Activated CD8-positive, alpha-beta T cell treated with anti-CD3 and anti-CD28 coated beads, Interleukin-2, amount 10 ng/mL, durations not matched to agents 7 days and 5 days (primary cell): ENCODE measurements at regions of chr6 and their contacts with region 1.

Region 1: GRCh38 chr6:30102970-30103874 is 9.7 kb downstream of the TRIM31 start:
- DNase-seq: peak; percentile 90
- ATAC-seq: peak; percentile 83
- H3K4me3 Mint-ChIP-seq: peak overlapping the region; percentile 79
- H3K27ac Mint-ChIP-seq: no peak overlapping the region
- H3K4me1 Mint-ChIP-seq: peaks cover 36% of the 10 kb centered on the region
- H3K27me3 Mint-ChIP-seq: peaks cover 62% of the 10 kb centered on the region

Region 2: GRCh38 chr6:29153083-29153482 is 950.1 kb before region 1 on chr6:
- CTCF ChIA-PET with region 1: no interaction called
- POLR2A ChIA-PET with region 1: no interaction called
- DNase-seq: no peak
- ATAC-seq: no peak
- H3K4me3 Mint-ChIP-seq: no peak overlapping the region
- H3K27ac Mint-ChIP-seq: no peak overlapping the region
- H3K4me1 Mint-ChIP-seq: no peaks in the 10 kb centered on the region
- H3K27me3 Mint-ChIP-seq: peaks cover 10% of the 10 kb centered on the region

Region 3: DNA sequence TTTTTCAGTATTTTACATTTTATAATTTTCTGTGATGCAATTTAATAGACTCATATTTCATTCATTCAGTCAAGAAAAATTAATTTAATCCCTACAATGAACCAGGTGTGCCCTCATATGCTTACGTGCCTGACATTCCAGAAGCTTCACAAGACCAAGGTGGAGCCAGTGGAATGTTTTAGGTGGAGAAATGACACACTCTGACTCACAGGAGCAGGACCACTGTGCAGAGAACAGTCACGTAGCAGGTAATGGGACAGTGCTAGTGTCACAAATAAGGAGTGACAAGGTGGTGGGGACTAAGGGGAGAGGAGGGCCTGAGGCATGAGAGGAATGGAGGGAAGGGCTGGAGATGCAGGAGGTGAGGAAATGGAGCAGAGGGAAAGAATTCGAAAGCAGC is 312.6 kb before region 1 on chr6:
- CTCF ChIA-PET with region 1: no interaction called
- POLR2A ChIA-PET with region 1: no interaction called
- DNase-seq: no peak
- ATAC-seq: no peak
- H3K4me3 Mint-ChIP-seq: no peak overlapping the region
- H3K27ac Mint-ChIP-seq: no peak overlapping the region
- H3K4me1 Mint-ChIP-seq: peaks cover 15% of the 10 kb centered on the region
- H3K27me3 Mint-ChIP-seq: peaks cover 60% of the 10 kb centered on the region

Region 4: DNA sequence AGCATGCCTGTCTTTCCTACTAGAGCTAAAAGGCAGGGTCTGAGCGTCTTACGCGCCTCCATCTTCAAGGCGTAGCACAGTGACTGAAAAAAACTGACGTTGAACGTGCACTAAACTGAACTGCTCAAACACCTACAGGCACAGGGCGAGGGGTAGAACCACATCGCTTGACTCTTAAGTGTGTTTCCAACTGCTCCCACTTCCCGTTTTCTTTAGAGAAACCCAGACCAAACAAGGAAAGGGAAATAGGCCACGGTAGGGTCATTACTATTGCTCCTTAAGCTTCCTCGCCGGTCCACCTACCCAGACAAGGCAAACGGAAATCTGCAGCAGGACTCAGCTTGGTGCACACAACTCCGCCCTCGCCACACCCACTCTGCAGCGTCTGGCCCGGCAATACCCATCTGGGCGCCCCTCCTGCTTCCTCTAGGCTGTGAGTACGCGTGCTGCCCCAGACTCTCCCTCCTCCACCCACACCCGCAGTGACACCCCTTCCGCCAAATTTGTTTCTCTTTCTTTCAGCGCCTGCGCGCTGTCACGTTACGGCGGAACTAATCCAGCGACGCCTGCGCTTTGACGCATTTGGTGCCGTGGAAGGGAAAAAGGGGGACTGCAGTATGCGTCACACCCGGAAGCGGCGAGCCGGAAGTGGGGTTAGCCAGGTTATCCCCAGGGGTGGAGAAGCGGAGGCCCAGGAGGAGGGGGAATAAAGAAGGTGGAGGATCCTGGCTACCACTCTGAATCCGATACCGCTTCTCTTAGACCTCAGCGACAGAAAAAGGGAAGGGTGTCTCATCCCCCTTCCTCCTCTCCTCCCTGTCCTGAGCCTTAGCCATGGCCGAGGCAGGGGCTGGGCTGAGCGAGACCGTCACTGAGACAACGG is 36.4 kb before region 1 on chr6 and contains the start of gene PPP1R11:
- CTCF ChIA-PET with region 1: interaction called, 19 read pairs
- POLR2A ChIA-PET with region 1: interaction called, 7 read pairs
- DNase-seq: peak; percentile 100
- ATAC-seq: peak; percentile 98
- H3K4me3 Mint-ChIP-seq: peak within 1 kb of the TSS; percentile 87
- H3K27ac Mint-ChIP-seq: peak within 1 kb of the TSS; percentile 94
- H3K4me1 Mint-ChIP-seq: peaks cover 54% of the 10 kb centered on the region
- H3K27me3 Mint-ChIP-seq: peaks cover 10% of the 10 kb centered on the region
- total RNA-seq, gene PPP1R11: 48.1 to 50.3 TPM

Region 5: GRCh38 chr6:30087876-30088275 is 15.3 kb before region 1 on chr6:
- CTCF ChIA-PET with region 1: interaction called, 19 read pairs
- POLR2A ChIA-PET with region 1: no interaction called
- DNase-seq: no peak
- ATAC-seq: no peak
- H3K4me3 Mint-ChIP-seq: no peak overlapping the region
- H3K27ac Mint-ChIP-seq: no peak overlapping the region
- H3K4me1 Mint-ChIP-seq: no peaks in the 10 kb centered on the region
- H3K27me3 Mint-ChIP-seq: peaks cover 46% of the 10 kb centered on the region

Region 6: DNA sequence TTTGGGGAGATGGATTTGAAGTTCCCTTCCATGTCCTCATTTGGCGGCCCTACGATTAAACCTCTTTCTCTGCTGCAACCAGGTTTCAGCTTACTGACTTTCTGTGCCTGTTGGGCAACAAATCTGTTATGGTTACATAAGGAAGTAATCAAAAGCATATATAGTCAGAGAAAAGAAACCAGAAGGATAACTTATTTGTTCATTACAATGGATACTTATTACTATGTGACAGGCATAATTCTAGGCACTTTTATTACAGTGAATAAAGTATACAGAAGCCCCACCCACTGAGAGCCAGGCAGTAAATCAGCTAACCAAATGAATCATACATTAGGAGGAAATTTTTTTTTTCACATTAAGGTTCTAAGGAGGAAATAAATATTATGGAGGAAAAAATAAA is 19.3 kb after region 1 on chr6:
- CTCF ChIA-PET with region 1: interaction called, 71 read pairs
- POLR2A ChIA-PET with region 1: no interaction called
- DNase-seq: no peak
- ATAC-seq: no peak
- H3K4me3 Mint-ChIP-seq: no peak overlapping the region
- H3K27ac Mint-ChIP-seq: no peak overlapping the region
- H3K4me1 Mint-ChIP-seq: peaks cover 1% of the 10 kb centered on the region
- H3K27me3 Mint-ChIP-seq: peaks cover 51% of the 10 kb centered on the region

Region 7: GRCh38 chr6:30136570-30137286 is 33.5 kb after region 1 on chr6:
- CTCF ChIA-PET with region 1: interaction called, 248 read pairs
- POLR2A ChIA-PET with region 1: interaction called, 4 read pairs
- DNase-seq: no peak
- ATAC-seq: no peak
- H3K4me3 Mint-ChIP-seq: no peak overlapping the region
- H3K27ac Mint-ChIP-seq: no peak overlapping the region
- H3K4me1 Mint-ChIP-seq: peaks cover 11% of the 10 kb centered on the region
- H3K27me3 Mint-ChIP-seq: peaks cover 50% of the 10 kb centered on the region

Region 8: GRCh38 chr6:30169658-30170614 is 66.7 kb after region 1 on chr6:
- CTCF ChIA-PET with region 1: interaction called, 39 read pairs
- POLR2A ChIA-PET with region 1: interaction called, 3 read pairs
- DNase-seq: peak; percentile 38
- ATAC-seq: peak; percentile 82
- H3K4me3 Mint-ChIP-seq: no peak overlapping the region
- H3K27ac Mint-ChIP-seq: no peak overlapping the region
- H3K4me1 Mint-ChIP-seq: peaks cover 29% of the 10 kb centered on the region
- H3K27me3 Mint-ChIP-seq: peaks cover 51% of the 10 kb centered on the region